Activated CD8-positive, alpha-beta memory T cell treated with anti-CD3 and anti-CD28 coated beads, Interleukin-2, amount 10 ng/mL, durations not matched to agents 7 days and 5 days (primary cell): ENCODE measurements at regions of chr2 and their contacts with region 1.

Region 1: GRCh38 chr2:218245214-218245613 is 15.6 kb upstream of the GPBAR1 start:
- DNase-seq: no peak
- ATAC-seq: no peak
- H3K4me3 Mint-ChIP-seq: no peak overlapping the region
- H3K27ac Mint-ChIP-seq: no peak overlapping the region
- H3K4me1 Mint-ChIP-seq: peaks cover 28% of the 10 kb centered on the region
- H3K27me3 Mint-ChIP-seq: no peaks in the 10 kb centered on the region

Region 2: GRCh38 chr2:217947383-217948350 is 297.5 kb before region 1 on chr2:
- CTCF ChIA-PET with region 1: no interaction called
- DNase-seq: no peak
- ATAC-seq: no peak
- H3K4me3 Mint-ChIP-seq: no peak overlapping the region
- H3K27ac Mint-ChIP-seq: no peak overlapping the region
- H3K4me1 Mint-ChIP-seq: peaks cover 18% of the 10 kb centered on the region
- H3K27me3 Mint-ChIP-seq: peaks cover 30% of the 10 kb centered on the region

Region 3: DNA sequence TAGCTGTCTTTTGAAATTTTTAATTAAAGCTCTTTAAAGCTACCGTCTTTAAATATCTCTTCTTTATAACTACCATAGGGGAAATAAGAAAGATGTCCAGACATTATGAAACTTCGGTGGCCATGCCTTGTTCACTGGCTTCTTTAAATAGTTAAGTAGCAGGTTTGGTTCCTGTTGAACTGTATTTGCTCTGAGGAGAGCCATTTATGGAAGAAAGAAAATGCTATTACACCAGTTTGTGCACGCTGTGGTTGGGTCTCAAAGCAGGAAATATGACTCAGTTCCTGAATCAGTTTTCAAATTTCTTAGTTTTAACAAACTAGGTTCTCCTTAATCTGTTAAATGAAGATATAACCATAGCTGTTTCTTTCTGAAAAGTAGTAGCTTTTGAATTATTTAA is 16.0 kb before region 1 on chr2:
- CTCF ChIA-PET with region 1: interaction called, 10 read pairs
- DNase-seq: peak; percentile 80
- ATAC-seq: peak; percentile 88
- H3K4me3 Mint-ChIP-seq: peak overlapping the region; percentile 42
- H3K27ac Mint-ChIP-seq: peak overlapping the region; percentile 90
- H3K4me1 Mint-ChIP-seq: peaks cover 75% of the 10 kb centered on the region
- H3K27me3 Mint-ChIP-seq: no peaks in the 10 kb centered on the region

Region 4: GRCh38 chr2:218257390-218257981 is 12.3 kb after region 1 on chr2:
- CTCF ChIA-PET with region 1: interaction called, 16 read pairs
- DNase-seq: peak; percentile 81
- ATAC-seq: peak; percentile 80
- H3K4me3 Mint-ChIP-seq: peak overlapping the region; percentile 8
- H3K27ac Mint-ChIP-seq: peak overlapping the region; percentile 86
- H3K4me1 Mint-ChIP-seq: peaks cover 20% of the 10 kb centered on the region
- H3K27me3 Mint-ChIP-seq: no peaks in the 10 kb centered on the region